Common myeloid progenitor, CD34-positive (primary cell): ENCODE measurements at regions of chr17 and their contacts with region 1.

Region 1: DNA sequence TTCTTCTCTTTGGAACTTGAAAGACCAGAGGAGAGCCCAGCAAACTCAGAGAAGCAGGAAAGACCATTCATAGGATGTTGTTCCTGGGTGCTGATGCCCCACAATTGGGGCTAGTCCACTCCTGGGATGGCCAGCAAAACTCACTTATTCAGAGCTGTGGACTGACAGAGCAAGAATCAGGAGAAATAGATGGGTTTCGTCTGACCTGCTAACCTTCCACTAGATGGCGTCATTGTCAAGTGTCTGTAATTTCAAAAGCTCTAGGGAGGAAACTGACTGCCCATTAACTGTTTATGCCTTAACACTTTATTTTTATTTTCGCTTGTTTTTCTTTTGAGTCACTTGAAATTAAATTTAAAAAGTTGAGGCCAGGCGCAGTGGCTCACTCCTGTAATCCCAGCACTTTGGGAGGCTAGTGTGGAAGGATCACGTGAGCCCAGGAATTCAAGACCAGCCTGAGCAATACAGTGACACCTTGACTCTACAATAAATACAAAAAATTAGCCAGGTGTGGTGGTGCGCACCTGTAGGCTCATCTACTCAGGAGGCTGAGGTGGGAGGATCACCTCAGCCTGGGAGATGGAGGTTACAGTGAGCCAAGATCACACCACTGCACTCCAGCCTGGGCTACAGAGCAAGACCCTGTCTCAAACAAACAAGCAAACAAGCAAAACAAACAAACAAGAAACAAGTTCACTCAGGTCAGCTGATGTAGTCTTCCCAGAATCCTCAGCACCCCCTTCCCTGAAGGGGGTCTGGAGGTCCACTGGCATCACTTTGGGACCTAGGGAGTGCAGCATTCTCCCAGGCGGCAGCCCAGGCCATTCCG is 28.6 kb upstream of the MILR1 start:
- DNase-seq: peak; percentile 78 to 90 (median 88)
- H3K4me3 ChIP-seq: no peak overlapping the region
- H3K27ac ChIP-seq: no peak overlapping the region
- H3K4me1 ChIP-seq: peaks cover 0 to 3% (median 1%) of the 10 kb centered on the region in 4 experiments
- H3K27me3 ChIP-seq: no peaks in the 10 kb centered on the region

Region 2: GRCh38 chr17:64320613-64321553 is 99.5 kb before region 1 on chr17:
- CTCF ChIA-PET with region 1: interaction called, 76 read pairs
- POLR2A ChIA-PET with region 1: no interaction called
- DNase-seq: peak; percentile 68 to 74 (median 69)
- H3K4me3 ChIP-seq: peak overlapping the region in 2 of 7 experiments; percentile 11 to 50
- H3K27ac ChIP-seq: no peak overlapping the region
- H3K4me1 ChIP-seq: peaks cover 0 to 6% (median 4%) of the 10 kb centered on the region in 4 experiments
- H3K27me3 ChIP-seq: no peaks in the 10 kb centered on the region

Region 3: DNA sequence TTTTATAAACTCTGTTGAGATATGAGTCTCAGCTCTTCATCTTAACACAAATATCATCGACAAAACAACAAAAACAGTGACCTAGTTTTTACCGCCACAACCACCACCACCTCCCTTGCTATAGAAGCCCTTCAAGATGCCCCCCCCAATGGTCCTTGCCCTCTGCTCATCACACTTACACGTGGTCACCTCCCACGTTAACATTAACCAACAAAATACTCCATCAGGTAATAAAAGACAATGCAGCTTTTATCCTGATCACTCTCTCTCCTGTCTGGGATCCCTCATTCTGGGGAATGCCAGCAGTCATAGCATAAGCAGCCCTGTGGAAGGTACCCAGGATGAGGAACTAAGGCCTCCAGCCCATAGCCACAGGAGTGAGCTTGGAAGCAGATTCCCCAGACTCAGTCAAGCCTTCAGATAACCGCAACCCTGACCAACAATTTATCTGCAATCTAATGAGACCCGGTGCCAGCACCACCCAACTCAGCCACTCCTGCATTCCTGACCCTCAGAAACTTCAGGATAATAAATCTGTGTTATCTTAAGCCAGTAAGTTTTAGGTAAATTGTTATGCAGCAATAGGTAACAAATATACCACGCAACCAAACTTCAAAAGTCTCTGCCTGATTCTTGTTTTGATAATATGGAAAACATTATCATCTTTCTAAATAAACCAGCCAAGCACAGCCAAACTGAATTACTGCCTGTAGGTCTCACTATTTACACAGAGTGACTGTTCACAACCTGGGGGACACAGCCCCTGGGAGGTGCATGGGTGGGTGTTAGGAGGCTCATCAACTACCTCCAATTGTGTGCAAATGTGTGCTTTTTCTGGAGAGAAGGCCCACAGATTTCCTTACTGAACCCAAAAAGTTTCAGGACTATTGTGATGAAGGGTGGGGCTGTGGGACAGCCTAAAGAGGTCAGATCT is 35.8 kb before region 1 on chr17:
- CTCF ChIA-PET with region 1: interaction called, 52 read pairs
- POLR2A ChIA-PET with region 1: interaction called, 3 read pairs
- DNase-seq: no peak
- H3K4me3 ChIP-seq: peak overlapping the region in 2 of 7 experiments; percentile 20 to 24
- H3K27ac ChIP-seq: peak overlapping the region; percentile 12 to 85
- H3K4me1 ChIP-seq: peaks cover 17 to 56% (median 50%) of the 10 kb centered on the region in 4 experiments
- H3K27me3 ChIP-seq: no peaks in the 10 kb centered on the region

Region 4: DNA sequence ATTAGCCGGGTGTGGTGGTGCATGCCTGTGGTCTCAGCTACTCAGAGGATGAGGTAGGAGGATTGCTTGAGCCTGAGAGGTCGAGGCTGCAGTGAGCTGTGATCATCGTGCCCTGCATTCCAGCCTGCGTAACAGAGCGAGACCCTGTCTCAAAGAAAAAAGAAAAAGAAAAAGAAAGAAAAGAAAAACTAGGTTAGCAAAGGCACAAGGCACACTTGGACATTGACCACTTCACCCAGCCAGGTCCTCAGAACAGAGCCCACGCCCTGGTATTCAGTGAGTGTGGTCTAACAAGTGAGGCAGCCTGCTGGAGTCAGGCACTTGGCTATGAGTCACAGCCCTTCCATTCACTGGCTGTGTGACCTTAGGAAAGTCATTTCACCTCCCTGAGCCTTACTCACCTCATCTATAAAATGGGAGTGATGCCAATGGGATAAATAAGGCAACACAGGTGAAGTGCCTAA is 39.0 kb after region 1 on chr17:
- CTCF ChIA-PET with region 1: interaction called, 28 read pairs
- POLR2A ChIA-PET with region 1: no interaction called
- DNase-seq: no peak
- H3K4me3 ChIP-seq: no peak overlapping the region
- H3K27ac ChIP-seq: no peak overlapping the region
- H3K4me1 ChIP-seq: peaks cover 0 to 16% (median 4%) of the 10 kb centered on the region in 4 experiments
- H3K27me3 ChIP-seq: no peaks in the 10 kb centered on the region

Region 5: GRCh38 chr17:64496786-64497564 is 76.6 kb after region 1 on chr17 and contains the start of gene POLG2:
- CTCF ChIA-PET with region 1: interaction called, 261 read pairs
- POLR2A ChIA-PET with region 1: no interaction called
- DNase-seq: peak; percentile 96 to 98 (median 96)
- H3K4me3 ChIP-seq: peak within 1 kb of the TSS; percentile 71 to 95 (median 88)
- H3K27ac ChIP-seq: peak within 1 kb of the TSS; percentile 87 to 95
- H3K4me1 ChIP-seq: peaks cover 10 to 57% (median 34%) of the 10 kb centered on the region in 4 experiments
- H3K27me3 ChIP-seq: no peaks in the 10 kb centered on the region

Region 6: DNA sequence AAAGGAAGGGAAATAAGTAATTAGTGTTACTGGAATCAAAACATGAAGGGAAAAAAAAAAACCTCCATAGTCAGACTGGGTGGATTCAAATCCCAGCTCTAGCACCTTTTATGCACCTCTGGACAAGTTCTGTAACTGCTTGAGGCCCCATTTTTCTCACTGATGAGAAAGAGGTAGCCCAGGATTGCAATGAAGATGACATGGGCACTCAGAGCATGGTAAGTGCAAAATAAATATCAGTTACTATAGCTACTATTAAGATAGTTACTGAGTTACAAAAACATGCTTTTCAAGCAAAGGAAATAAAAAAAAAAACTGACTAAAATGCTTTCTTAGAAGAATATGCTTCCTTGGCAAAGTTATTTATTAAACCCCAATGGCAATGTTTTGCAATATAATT is 145.2 kb after region 1 on chr17:
- CTCF ChIA-PET with region 1: no interaction called
- POLR2A ChIA-PET with region 1: no interaction called
- DNase-seq: peak in 2 of 3 donors; percentile 37 to 55
- H3K4me3 ChIP-seq: no peak overlapping the region
- H3K27ac ChIP-seq: no peak overlapping the region
- H3K4me1 ChIP-seq: no peaks in the 10 kb centered on the region
- H3K27me3 ChIP-seq: no peaks in the 10 kb centered on the region

Region 7: DNA sequence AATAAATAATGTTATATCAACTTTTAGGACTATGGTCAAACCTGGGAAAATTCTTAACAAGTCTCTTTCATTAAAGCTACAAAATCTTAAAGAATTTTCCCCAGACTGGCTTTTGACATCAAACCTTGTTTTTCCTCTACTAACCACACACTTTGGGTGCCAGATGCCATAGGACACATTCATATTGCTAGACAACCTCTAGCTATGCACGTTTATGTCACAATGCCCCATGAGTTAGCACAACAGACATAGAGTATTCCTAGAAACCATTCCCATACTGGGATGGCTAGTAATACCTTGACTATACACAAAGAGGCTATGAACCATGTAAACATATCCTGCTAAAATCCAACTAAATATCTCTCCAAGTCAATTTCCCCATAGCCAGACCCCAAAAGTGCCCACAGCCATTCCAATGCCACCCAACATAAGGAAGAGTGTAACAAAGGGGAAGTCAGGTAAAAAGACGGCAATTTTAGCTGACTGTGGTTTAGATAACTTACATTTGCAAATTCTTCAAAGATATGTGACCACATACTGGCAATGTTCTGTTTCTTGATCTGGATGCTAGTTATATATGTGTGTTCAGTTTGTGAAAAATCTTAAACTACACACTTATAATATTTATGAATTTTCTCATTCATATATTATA is 218.3 kb after region 1 on chr17:
- CTCF ChIA-PET with region 1: no interaction called
- POLR2A ChIA-PET with region 1: no interaction called
- DNase-seq: peak; percentile 29 to 83 (median 74)
- H3K4me3 ChIP-seq: no peak overlapping the region
- H3K27ac ChIP-seq: no peak overlapping the region
- H3K4me1 ChIP-seq: peaks cover 0 to 25% (median 11%) of the 10 kb centered on the region in 4 experiments
- H3K27me3 ChIP-seq: no peaks in the 10 kb centered on the region